PC-3 (cell line): ENCODE measurements at regions of chr13 and their contacts with region 1.

Region 1: DNA sequence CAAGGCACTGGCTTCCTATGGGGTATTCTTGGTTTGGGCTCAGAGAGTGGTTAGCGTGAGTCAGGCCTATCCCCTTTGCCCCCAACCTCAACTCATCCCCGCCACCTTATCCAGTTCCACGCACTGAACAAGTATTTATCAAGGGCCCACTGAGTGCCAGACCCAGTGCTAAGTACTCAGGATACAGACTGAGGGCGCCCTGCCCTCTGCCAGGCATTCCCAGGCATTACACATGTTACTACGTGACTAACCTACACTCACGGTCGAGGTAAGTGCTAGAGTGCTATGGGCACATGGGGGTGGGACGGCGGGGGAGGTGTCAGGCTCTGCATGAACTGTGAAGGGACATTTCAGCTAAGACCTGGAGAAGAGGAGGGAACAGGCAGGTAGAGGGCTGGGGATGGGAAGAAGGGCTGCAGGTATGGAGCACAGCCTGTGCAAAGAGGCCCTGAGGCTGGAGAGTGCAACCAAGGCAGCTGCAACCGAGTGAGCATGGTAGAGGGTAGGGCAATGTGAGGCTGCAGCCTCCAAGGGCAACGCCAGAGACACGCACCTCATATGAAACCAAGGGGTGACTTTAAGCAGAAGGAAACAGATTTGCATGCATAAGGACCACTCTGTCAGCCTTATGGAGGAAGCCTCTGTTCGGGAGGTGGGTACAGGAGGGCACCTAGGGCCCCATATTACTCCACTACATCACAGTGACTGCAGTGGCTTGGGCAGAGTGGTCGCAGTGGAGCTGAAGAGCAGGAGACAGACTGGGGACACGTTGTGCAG is 22.5 kb downstream of the DHRS12 start:
- DNase-seq: peak; percentile 60
- ATAC-seq: peak; percentile 90
- H3K4me3 ChIP-seq: no peak overlapping the region
- H3K27ac ChIP-seq: no peak overlapping the region
- H3K4me1 ChIP-seq: no peaks in the 10 kb centered on the region
- H3K27me3 ChIP-seq: no peaks in the 10 kb centered on the region
- CTCF ChIP-seq: peak; percentile 68

Region 2: GRCh38 chr13:51590971-51591627 is 190.3 kb before region 1 on chr13:
- CTCF ChIA-PET with region 1: no interaction called
- POLR2A ChIA-PET with region 1: no interaction called
- intact Hi-C with region 1: loop called (anchors 5 kb)
- DNase-seq: peak; percentile 68
- ATAC-seq: peak; percentile 79
- H3K4me3 ChIP-seq: peak overlapping the region; percentile 32; the same call in 1 of the 2 replicates
- H3K27ac ChIP-seq: peak overlapping the region; percentile 41
- H3K4me1 ChIP-seq: peaks cover 33% of the 10 kb centered on the region
- H3K27me3 ChIP-seq: no peaks in the 10 kb centered on the region
- CTCF ChIP-seq: no peak

Region 3: DNA sequence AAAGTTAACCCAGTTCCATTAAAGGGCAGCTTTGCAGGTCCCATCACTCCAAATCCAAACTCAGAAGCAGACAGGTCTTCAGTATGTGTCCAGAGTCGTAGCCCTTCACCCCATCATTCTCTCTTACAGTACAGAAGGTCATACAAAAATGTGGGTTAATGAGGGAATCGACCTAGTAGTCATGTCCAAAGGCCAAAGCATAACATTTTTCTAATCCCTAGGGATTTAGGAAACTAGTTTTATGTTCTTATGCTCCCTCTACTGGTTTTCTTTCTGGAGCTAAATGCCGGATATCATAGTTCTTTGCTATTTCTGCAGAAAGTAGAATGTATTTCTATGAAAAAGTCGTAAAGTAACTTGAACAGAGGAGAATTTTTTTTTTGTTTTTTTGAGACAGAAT is 49.7 kb before region 1 on chr13:
- CTCF ChIA-PET with region 1: no interaction called
- POLR2A ChIA-PET with region 1: no interaction called
- intact Hi-C with region 1: no loop called
- DNase-seq: peak; percentile 19
- ATAC-seq: no peak
- H3K4me3 ChIP-seq: no peak overlapping the region
- H3K27ac ChIP-seq: no peak overlapping the region
- H3K4me1 ChIP-seq: peaks cover 19% of the 10 kb centered on the region
- H3K27me3 ChIP-seq: no peaks in the 10 kb centered on the region
- CTCF ChIP-seq: peak; percentile 44

Region 4: GRCh38 chr13:51746802-51747201 is 34.6 kb before region 1 on chr13:
- CTCF ChIA-PET with region 1: no interaction called
- POLR2A ChIA-PET with region 1: no interaction called
- intact Hi-C with region 1: no loop called
- DNase-seq: no peak
- ATAC-seq: no peak
- H3K4me3 ChIP-seq: no peak overlapping the region
- H3K27ac ChIP-seq: no peak overlapping the region
- H3K4me1 ChIP-seq: no peaks in the 10 kb centered on the region
- H3K27me3 ChIP-seq: no peaks in the 10 kb centered on the region
- CTCF ChIP-seq: no peak